ENCODE measurements at regions of chr4 and their contacts with region 1.

Region 1: GRCh38 chr4:28654618-28655017 is 1794.0 kb downstream of the STIM2 start:
- DNase-seq: no peak
- H3K4me3 ChIP-seq: no peak overlapping the region
- H3K27me3 ChIP-seq: no peaks in the 10 kb centered on the region
- CTCF ChIP-seq: no peak

Region 2: GRCh38 chr4:28557755-28558154 is 96.9 kb before region 1 on chr4:
- CTCF ChIA-PET with region 1: no interaction called
- POLR2A ChIA-PET with region 1: interaction called, 17 read pairs
- DNase-seq: no peak
- H3K4me3 ChIP-seq: no peak overlapping the region
- H3K27me3 ChIP-seq: no peaks in the 10 kb centered on the region
- CTCF ChIP-seq: no peak